Thyroid gland (tissue), 4 donors: ENCODE measurements at regions of chr16 and their contacts with region 1.

Region 1: GRCh38 chr16:66483689-66484481 is 56.8 kb downstream of the BEAN1 start:
- DNase-seq: peak; percentile 68 to 80
- H3K4me3 ChIP-seq: no peak overlapping the region
- H3K27ac ChIP-seq: no peak overlapping the region
- H3K4me1 ChIP-seq: peaks cover 9 to 26% of the 10 kb centered on the region in 2 donors
- H3K27me3 ChIP-seq: no peaks in the 10 kb centered on the region
- CTCF ChIP-seq: peak; percentile 61 to 97 (median 88)
- POLR2A ChIP-seq: no peak

Region 2: DNA sequence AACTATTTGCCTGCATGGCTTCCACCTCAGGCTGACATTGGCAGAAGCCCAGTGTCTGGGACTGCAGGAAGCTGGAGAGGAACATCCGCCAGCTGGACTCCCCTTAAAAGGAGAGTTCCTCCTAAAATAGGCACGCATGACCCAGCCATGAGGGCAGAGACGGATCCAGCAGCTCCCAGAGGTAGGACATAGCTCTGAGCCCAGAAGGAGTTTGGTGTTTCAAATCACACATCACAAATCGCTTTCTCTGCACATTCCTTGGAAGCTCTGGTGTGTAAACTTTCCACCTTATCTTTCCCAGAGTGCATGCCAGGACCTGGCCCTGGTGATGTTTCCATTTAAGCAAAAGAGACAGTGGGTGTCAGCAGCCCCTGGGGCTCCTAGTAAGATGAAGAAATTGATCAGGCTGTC is 348.5 kb before region 1 on chr16:
- intact Hi-C with region 1: no loop called
- DNase-seq: peak; percentile 17 to 37
- H3K4me3 ChIP-seq: no peak overlapping the region
- H3K27ac ChIP-seq: no peak overlapping the region
- H3K4me1 ChIP-seq: peaks cover 0 to 12% of the 10 kb centered on the region in 2 donors
- H3K27me3 ChIP-seq: no peaks in the 10 kb centered on the region
- CTCF ChIP-seq: no peak
- POLR2A ChIP-seq: no peak

Region 3: GRCh38 chr16:66357153-66357928 is 126.5 kb before region 1 on chr16:
- intact Hi-C with region 1: loop called (anchors 5 kb)
- DNase-seq: peak; percentile 64 to 69
- H3K4me3 ChIP-seq: no peak overlapping the region
- H3K27ac ChIP-seq: no peak overlapping the region
- H3K4me1 ChIP-seq: peaks cover 16 to 28% of the 10 kb centered on the region in 2 donors
- H3K27me3 ChIP-seq: no peaks in the 10 kb centered on the region
- CTCF ChIP-seq: peak; percentile 44 to 76 (median 62)
- POLR2A ChIP-seq: no peak

Region 4: DNA sequence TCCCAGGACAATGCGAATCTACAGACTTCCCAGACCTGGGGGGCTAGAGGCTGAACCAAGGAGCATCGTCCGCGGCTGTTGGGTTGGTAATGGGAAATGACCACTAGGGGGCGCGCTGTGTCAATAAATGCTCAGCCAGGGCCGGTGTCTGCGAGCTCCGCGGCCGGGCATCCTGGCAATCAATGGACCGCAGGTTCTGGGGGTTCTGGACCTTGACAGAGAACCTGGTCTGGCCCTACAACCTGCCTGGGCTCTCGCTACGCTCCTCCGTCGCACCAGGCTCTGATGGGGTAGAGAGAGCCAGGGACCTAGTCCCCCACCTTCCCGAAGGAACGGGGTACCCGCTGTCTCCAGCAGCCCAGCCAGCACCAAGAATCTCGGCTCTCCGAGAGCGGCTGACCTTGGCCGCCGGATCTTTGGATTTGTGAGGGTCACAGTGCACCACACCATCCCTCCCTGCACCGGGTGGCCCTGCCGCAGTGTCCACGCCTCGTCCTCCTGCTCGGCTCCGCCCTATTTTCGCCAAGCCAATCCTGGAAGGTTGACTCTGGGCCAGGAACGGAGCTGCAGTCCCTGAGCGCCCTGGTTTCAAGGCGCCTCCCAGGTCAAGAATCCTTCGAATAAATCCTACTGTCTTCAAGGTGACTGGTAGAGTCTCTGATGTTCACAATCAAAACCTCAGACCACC is 77.2 kb before region 1 on chr16:
- intact Hi-C with region 1: loop called (anchors 5 kb)
- DNase-seq: peak; percentile 78 to 87
- H3K4me3 ChIP-seq: peak overlapping the region in 2 of 3 donors; percentile 9 to 33
- H3K27ac ChIP-seq: no peak overlapping the region
- H3K4me1 ChIP-seq: peaks cover 0 to 13% of the 10 kb centered on the region in 2 donors
- H3K27me3 ChIP-seq: no peaks in the 10 kb centered on the region
- CTCF ChIP-seq: peak; percentile 64 to 92 (median 88)
- POLR2A ChIP-seq: no peak

Region 5: GRCh38 chr16:66552286-66553177 is 68.6 kb after region 1 on chr16 and contains the start of gene CKLF:
- intact Hi-C with region 1: loop called (anchors 5 kb)
- DNase-seq: peak; percentile 86
- H3K4me3 ChIP-seq: peak within 1 kb of the TSS in 2 of 3 donors; percentile 51 to 53
- H3K27ac ChIP-seq: peak within 1 kb of the TSS; percentile 92 to 97 (median 94)
- H3K4me1 ChIP-seq: peaks cover 35% of the 10 kb centered on the region in 2 donors
- H3K27me3 ChIP-seq: no peaks in the 10 kb centered on the region
- CTCF ChIP-seq: no peak
- POLR2A ChIP-seq: peak in 1 of 2 donors; percentile 83
- total RNA-seq, gene CKLF: 22.1 to 79.4 (median 49.9) TPM

Region 6: GRCh38 chr16:66608241-66609138 is 124.6 kb after region 1 on chr16:
- intact Hi-C with region 1: loop called (anchors 5 kb)
- DNase-seq: peak; percentile 95 to 96
- H3K4me3 ChIP-seq: no peak overlapping the region
- H3K27ac ChIP-seq: peak overlapping the region in 2 of 3 donors; percentile 28 to 37
- H3K4me1 ChIP-seq: peaks cover 13 to 29% of the 10 kb centered on the region in 2 donors
- H3K27me3 ChIP-seq: no peaks in the 10 kb centered on the region
- CTCF ChIP-seq: peak; percentile 79 to 91 (median 88)
- POLR2A ChIP-seq: no peak